Activated CD8-positive, alpha-beta T cell treated with anti-CD3 and anti-CD28 coated beads for 36 hours (primary cell): ENCODE measurements at regions of chr4 and their contacts with region 1.

Region 1: GRCh38 chr4:27048429-27049238 is 188.0 kb downstream of the STIM2 start:
- DNase-seq: no peak
- ATAC-seq: no peak
- H3K4me3 Mint-ChIP-seq: no peak overlapping the region
- H3K27ac Mint-ChIP-seq: no peak overlapping the region
- H3K4me1 Mint-ChIP-seq: peaks cover 6% of the 10 kb centered on the region
- H3K27me3 Mint-ChIP-seq: peaks cover 28% of the 10 kb centered on the region
- CTCF ChIP-seq: peak; percentile 91

Region 2: GRCh38 chr4:27318743-27319142 is 270.1 kb after region 1 on chr4:
- CTCF ChIA-PET with region 1: interaction called, 8 read pairs
- POLR2A ChIA-PET with region 1: no interaction called
- intact Hi-C with region 1: loop called (anchors 5 kb)
- DNase-seq: peak; percentile 47
- ATAC-seq: no peak
- H3K4me3 Mint-ChIP-seq: no peak overlapping the region
- H3K27ac Mint-ChIP-seq: no peak overlapping the region
- H3K4me1 Mint-ChIP-seq: no peaks in the 10 kb centered on the region
- H3K27me3 Mint-ChIP-seq: peaks cover 7% of the 10 kb centered on the region
- CTCF ChIP-seq: no peak